ENCODE measurements at regions of chrX and their contacts with region 1.

Region 1: DNA sequence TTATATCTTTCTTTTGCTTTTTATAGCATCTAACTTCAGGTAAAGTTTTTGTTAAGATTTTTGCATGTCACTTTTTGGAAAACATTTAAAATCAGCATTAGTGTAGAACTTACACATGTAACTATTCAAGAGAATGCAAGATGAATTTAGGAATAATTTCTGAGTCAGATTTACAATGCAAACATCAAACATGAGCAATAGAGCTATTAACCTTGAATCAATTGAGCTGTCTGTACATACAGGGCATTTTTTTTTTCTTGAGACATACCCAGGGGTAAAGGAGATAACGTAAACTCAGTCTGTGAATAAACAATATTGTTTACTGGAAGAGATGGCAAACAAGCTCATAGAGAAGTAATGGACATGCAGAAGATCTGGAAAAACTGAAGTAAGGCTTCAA is 311.5 kb downstream of the IL1RAPL2 start:
- DNase-seq: no peak
- ATAC-seq: no peak
- H3K4me3 ChIP-seq: no peak overlapping the region
- H3K4me3 Mint-ChIP-seq: no peak overlapping the region
- H3K27ac ChIP-seq: no peak overlapping the region
- H3K27ac Mint-ChIP-seq: no peak overlapping the region
- H3K4me1 ChIP-seq: no peaks in the 10 kb centered on the region
- H3K4me1 Mint-ChIP-seq: no peaks in the 10 kb centered on the region
- H3K27me3 ChIP-seq: no peaks in the 10 kb centered on the region
- H3K27me3 Mint-ChIP-seq: no peaks in the 10 kb centered on the region
- CTCF ChIP-seq: no peak

Region 2: GRCh38 chrX:104136241-104137019 is 741.1 kb before region 1 on chrX:
- CTCF ChIA-PET with region 1: no interaction called
- POLR2A ChIA-PET with region 1: no interaction called
- intact Hi-C with region 1: no loop called
- DNase-seq: peak in 8 of 9 experiments; percentile 32 to 82 (median 62)
- ATAC-seq: peak; percentile 70
- H3K4me3 ChIP-seq: no peak overlapping the region
- H3K4me3 Mint-ChIP-seq: peak overlapping the region; percentile 22
- H3K27ac ChIP-seq: no peak overlapping the region
- H3K27ac Mint-ChIP-seq: no peak overlapping the region
- H3K4me1 ChIP-seq: peaks cover 13% of the 10 kb centered on the region
- H3K4me1 Mint-ChIP-seq: peaks cover 28% of the 10 kb centered on the region
- H3K27me3 ChIP-seq: no peaks in the 10 kb centered on the region
- H3K27me3 Mint-ChIP-seq: no peaks in the 10 kb centered on the region
- CTCF ChIP-seq: peak; percentile 61

Region 3: DNA sequence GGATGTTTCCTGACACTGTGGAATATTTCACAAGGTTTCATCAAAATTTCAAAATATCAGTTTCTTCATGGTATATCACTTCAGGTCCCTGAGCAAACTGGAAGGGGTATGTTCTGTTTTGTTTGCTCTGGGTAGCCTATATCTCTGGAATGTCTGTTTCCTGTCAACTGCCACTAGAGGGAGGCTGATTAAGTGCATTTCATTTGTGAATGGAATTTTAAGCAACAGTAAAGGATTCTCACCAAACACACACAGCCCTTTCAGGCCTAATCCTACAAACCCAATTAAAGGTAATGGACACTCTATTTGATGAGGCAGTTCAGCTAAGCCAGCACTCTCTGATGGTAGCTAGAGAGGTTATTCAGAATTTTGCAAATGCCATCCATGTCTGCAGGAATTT is 35.8 kb after region 1 on chrX:
- CTCF ChIA-PET with region 1: no interaction called
- POLR2A ChIA-PET with region 1: no interaction called
- intact Hi-C with region 1: loop called in 1 of 2 experiments (anchors 2 kb)
- DNase-seq: peak in 1 of 9 experiments; percentile 4
- ATAC-seq: peak; percentile 26
- H3K4me3 ChIP-seq: no peak overlapping the region
- H3K4me3 Mint-ChIP-seq: no peak overlapping the region
- H3K27ac ChIP-seq: no peak overlapping the region
- H3K27ac Mint-ChIP-seq: peak overlapping the region; percentile 27
- H3K4me1 ChIP-seq: peaks cover 12% of the 10 kb centered on the region
- H3K4me1 Mint-ChIP-seq: peaks cover 15% of the 10 kb centered on the region
- H3K27me3 ChIP-seq: no peaks in the 10 kb centered on the region
- H3K27me3 Mint-ChIP-seq: no peaks in the 10 kb centered on the region
- CTCF ChIP-seq: peak; percentile 26